ENCODE measurements at regions of chr3 and their contacts with region 1.

Region 1: DNA sequence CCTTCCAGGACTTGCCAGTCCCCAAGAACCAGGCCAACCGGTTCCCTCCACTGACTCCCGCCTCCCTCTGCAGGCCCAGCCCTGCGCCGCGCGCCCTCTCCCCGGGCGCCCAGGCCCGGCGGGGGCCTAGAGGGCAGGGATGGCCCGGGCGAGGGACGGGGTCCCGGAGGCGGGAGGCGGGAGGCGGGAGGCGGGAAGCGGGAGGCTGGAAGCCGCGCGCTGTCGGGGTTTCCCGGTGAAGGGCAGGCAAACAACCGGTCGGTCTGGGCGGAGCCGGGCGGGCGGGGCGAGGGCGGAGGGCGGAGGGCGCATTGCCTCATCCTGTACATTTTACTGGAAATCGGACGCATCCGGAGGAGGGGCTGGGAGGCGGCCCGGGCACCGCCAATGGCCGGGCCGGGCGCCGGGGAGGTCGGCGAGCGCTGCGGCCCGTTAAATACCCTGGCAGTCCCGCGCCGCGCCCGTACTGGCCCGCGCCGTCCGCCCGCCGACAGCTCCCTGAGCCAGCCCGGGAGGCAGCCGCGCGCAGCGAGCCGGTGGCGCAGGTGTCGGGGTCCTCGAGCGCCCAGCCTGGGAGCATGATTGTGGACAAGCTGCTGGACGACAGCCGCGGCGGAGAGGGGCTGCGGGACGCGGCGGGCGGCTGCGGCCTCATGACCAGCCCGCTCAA is at the start of gene NFKBIZ:
- H3K4me3 ChIP-seq: peak within 1 kb of the TSS; percentile 91
- H3K27ac ChIP-seq: peak within 1 kb of the TSS; percentile 89
- H3K4me1 ChIP-seq: no peaks in the 10 kb centered on the region
- CTCF ChIP-seq: no peak

Region 2: DNA sequence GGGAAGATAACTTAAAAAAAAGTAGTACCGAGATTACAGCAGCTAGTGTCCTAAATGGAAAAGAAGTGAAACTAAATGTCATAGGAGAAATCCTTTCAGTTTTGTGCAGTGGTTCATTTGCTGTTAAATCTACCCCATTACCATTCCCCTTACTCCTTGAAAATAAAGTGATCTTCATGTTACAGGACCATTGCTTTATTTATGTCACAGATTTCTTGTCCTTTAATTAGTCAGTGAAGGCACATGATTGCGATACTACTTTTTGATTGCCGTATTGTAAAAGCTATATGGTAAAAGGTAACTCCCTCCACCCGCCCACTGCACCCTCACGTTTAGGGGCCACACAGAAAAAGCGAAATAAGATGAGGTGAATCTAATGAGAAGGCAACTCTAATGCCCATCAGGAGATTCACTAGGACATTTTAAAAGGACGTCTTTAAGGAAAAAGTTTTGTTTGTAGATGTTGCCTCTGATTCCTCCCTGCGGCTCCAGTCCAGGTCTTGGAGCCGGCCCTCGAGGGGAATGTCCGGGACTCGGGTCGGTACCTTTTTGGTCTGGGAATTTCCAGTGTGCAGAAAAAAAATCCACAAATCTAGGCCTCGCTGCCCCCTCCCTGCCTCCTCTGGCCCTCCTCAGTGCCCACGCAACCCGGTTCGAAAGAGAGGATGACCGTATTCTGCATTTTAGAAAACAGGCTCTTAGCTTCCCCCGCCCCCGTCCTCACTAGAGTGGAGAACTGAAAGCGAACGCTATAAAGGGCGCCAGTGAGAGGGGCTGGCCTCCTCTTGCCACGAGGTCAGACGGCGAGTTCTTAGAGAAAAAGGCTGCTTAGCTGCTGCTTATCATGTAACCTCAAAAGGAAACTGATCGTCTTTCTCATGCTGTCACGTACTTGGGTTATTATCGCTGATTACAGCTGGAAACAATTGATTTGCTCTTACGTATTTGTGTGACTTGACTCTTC is 21.7 kb before region 1 on chr3:
- CTCF ChIA-PET with region 1: interaction called, 4 read pairs
- POLR2A ChIA-PET with region 1: interaction called, 14 read pairs
- H3K4me3 ChIP-seq: peak overlapping the region; percentile 38
- H3K27ac ChIP-seq: peak overlapping the region; percentile 56; the same call in 1 of the 2 replicates
- H3K4me1 ChIP-seq: no peaks in the 10 kb centered on the region
- CTCF ChIP-seq: no peak

Region 3: DNA sequence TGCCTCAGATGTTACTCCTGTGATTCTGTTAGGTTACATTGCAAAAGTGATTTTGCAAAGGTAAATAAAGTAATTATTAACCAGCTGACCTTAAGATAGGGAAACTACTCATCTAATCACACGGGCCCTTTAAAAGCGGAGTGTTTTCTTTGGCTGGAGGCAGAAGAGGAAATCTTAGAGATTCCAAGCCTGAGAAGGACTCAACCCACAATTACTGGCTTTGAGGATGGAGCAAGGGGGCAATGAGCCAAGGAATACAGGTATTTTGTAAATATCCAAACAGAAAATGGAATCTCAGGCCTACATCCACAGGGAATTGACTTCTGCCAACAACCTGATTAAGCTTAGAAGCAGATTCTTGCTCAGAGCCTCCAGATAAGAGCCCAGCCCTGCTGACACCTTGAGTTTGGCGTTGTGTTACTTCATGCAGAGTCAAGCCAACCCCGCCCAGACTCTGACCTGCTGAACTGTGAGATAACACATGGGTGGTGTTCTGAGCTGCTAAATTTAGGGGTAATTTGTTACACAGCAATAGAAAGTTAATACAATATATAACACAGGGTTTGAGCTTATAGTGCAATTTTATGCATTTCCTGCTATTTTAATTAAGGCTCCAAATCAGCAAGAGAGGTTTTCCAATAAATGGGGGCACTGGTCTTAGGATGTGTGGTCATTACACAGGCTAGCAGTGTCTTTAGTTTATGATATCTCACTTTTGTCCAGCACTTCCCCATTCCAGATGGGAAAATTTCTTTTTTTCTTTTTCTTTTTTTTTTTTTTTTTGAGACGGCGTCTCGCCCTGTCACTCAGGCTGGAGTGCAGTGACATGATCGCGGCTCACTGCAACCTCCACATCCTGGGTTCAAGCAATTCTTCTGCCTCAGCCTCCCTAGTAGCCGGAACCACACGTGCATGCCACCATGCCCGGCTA is 19.6 kb after region 1 on chr3:
- CTCF ChIA-PET with region 1: interaction called, 3 read pairs
- POLR2A ChIA-PET with region 1: interaction called, 10 read pairs
- H3K4me3 ChIP-seq: no peak overlapping the region
- H3K27ac ChIP-seq: no peak overlapping the region
- H3K4me1 ChIP-seq: peaks cover 3% of the 10 kb centered on the region; the same call in 1 of the 2 replicates
- CTCF ChIP-seq: no peak

Measured in HEK293 (cell line).